Left cardiac atrium (tissue), 4 donors: ENCODE measurements at regions of chr7 and their contacts with region 1.

Region 1: DNA sequence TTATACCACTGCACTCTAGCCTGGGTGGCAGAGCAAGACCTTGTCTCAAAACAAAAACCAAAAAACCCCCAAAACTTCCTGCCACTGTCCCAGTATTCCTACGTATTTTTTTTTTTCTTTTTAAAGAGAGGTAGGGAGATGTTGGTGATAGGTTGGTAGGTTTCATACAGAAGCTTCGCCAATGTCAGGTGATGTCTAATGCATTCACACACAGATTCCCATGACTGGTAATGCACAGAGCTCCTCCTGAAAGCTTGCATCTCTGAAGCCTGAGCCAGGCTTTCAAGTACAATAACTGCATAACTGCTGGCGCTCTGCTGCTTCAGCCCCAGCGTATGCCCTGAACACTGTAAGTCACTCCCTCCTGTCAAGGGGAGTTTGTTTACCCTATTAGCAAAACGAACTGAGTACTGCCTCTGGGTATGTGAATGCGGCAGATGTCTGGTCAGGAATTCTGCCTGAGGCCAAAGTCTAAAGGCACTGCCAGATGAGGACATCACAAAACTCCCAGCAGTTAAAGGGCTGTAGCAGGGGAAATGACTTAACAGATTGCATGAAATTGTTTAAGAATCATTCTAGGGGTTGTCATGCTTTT is 97.8 kb downstream of the NRCAM start:
- DNase-seq: no peak
- ATAC-seq: no peak

Region 2: DNA sequence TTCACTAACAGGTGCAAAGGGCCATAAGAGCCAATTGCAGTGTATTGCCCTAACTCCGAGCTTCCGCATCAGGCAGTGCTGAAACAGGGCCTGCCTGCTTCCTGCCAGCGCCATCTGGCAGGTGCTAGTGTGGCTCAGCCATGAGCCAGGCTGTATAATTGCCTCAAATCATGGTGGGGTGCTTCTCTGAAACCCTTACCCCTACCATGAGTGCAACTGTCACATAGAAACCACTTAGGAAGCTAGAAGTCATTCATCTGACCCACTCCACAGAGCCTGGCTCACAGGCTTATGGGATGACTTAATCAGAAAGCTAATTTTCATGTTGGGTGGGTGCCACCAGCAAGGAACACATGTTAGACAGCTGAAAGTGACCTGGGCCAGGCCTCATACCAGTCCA is 95.0 kb before region 1 on chr7:
- intact Hi-C with region 1: loop called in 1 of 2 experiments (anchors 10 kb)
- DNase-seq: no peak
- ATAC-seq: no peak

Region 3: GRCh38 chr7:108324053-108325038 is 34.1 kb before region 1 on chr7:
- intact Hi-C with region 1: no loop called
- DNase-seq: no peak
- ATAC-seq: no peak

Region 4: DNA sequence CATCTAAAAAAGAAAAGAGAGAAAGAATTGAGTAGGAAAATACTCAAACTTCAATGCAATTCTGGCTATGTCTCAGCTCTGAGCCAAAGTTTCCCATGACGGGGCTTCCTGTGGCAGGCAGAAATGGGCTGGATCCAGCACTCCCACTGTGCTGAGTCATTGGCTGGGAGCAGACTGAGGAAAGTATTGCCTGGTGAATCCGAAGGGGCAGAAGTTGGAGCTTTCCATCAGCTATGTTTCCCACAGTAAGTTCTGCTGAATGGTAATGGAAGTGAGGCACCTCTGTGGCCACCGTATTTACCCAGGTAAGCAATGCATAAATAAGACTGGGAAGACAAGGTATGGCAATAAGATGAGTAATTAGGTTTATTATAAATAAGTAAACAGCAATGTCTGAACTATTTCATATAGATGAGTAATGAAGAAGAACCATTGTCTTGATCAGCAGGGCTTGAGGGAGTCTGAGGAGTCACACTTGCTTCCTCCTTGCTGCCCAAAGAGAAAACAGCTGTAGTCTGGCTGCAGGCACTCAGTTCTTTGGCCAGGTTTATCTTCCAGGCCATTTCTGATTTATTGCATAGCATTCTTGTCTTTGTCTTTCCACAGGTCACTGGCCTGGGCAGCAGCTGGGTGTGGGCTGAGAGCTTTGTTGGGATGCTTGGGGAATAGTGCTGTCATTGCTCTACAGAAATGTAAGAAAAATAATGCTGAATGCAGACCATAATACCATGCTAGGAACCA is 466.6 kb after region 1 on chr7:
- intact Hi-C with region 1: no loop called
- DNase-seq: peak; percentile 58
- ATAC-seq: peak; percentile 61 to 98

Region 5: GRCh38 chr7:109407756-109408155 is 1049.3 kb after region 1 on chr7:
- intact Hi-C with region 1: no loop called
- DNase-seq: no peak
- ATAC-seq: no peak